Ascending aorta (tissue), 2 donors: ENCODE measurements at regions of chr9 and their contacts with region 1.

Region 1: GRCh38 chr9:27400334-27400880 is 103.5 kb upstream of the EQTN start:
- DNase-seq: no peak
- H3K4me3 ChIP-seq: no peak overlapping the region
- H3K27ac ChIP-seq: no peak overlapping the region
- H3K4me1 ChIP-seq: peaks cover 0 to 6% of the 10 kb centered on the region in 2 donors
- H3K27me3 ChIP-seq: no peaks in the 10 kb centered on the region
- CTCF ChIP-seq: no peak

Region 2: GRCh38 chr9:26656003-26656870 is 744.2 kb before region 1 on chr9:
- intact Hi-C with region 1: no loop called
- DNase-seq: no peak
- H3K4me3 ChIP-seq: no peak overlapping the region
- H3K27ac ChIP-seq: no peak overlapping the region
- H3K4me1 ChIP-seq: peaks cover 0 to 3% of the 10 kb centered on the region in 2 donors
- H3K27me3 ChIP-seq: no peaks in the 10 kb centered on the region
- CTCF ChIP-seq: peak in 2 of 3 experiments; percentile 29 to 47

Region 3: GRCh38 chr9:27457445-27457844 is 57.0 kb after region 1 on chr9:
- intact Hi-C with region 1: loop called (anchors 5 kb)
- DNase-seq: no peak
- H3K4me3 ChIP-seq: no peak overlapping the region
- H3K27ac ChIP-seq: no peak overlapping the region
- H3K4me1 ChIP-seq: peaks cover 0 to 10% of the 10 kb centered on the region in 2 donors
- H3K27me3 ChIP-seq: no peaks in the 10 kb centered on the region
- CTCF ChIP-seq: no peak

Region 4: DNA sequence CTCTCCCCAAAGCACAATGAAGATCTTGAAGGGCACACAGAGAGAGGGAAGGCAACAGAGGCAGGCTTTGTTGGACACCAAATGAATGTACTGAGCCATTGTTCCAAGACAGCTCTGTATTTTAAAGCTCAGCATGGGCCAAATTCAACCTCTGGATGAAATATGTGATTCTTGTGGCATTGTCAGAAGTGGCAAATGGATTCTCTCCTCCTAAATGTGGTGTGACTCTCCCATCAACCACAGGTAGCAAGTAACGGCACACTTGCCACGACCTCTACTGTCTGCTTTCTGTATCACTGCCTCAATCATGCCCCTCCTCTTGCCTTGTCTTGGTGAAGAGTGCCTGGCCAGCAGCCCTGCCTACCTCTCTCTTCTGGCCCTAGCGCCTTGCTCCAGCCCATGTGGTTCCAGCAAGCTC is 135.3 kb after region 1 on chr9:
- intact Hi-C with region 1: no loop called
- DNase-seq: no peak
- H3K4me3 ChIP-seq: no peak overlapping the region
- H3K27ac ChIP-seq: peak overlapping the region in 1 of 2 donors; percentile 24
- H3K4me1 ChIP-seq: peaks cover 16 to 68% of the 10 kb centered on the region in 2 donors
- H3K27me3 ChIP-seq: no peaks in the 10 kb centered on the region
- CTCF ChIP-seq: no peak